ENCODE measurements at regions of chr4 and their contacts with region 1.

Region 1: GRCh38 chr4:164716901-164717300 is 37.0 kb upstream of the SMIM31 start:
- DNase-seq: no peak
- ATAC-seq: peak in 1 of 8 donors; percentile 83
- H3K4me3 ChIP-seq: no peak overlapping the region
- H3K27ac ChIP-seq: no peak overlapping the region
- H3K4me1 ChIP-seq: no peaks in the 10 kb centered on the region
- H3K27me3 ChIP-seq: no peaks in the 10 kb centered on the region
- CTCF ChIP-seq: peak in 1 of 9 donors; percentile 9

Region 2: GRCh38 chr4:165404696-165405095 is 687.8 kb after region 1 on chr4:
- intact Hi-C with region 1: loop called in 1 of 10 experiments (anchors 5 kb)
- DNase-seq: no peak
- ATAC-seq: no peak
- H3K4me3 ChIP-seq: no peak overlapping the region
- H3K27ac ChIP-seq: no peak overlapping the region
- H3K4me1 ChIP-seq: no peaks in the 10 kb centered on the region
- H3K27me3 ChIP-seq: no peaks in the 10 kb centered on the region
- CTCF ChIP-seq: no peak

Region 3: DNA sequence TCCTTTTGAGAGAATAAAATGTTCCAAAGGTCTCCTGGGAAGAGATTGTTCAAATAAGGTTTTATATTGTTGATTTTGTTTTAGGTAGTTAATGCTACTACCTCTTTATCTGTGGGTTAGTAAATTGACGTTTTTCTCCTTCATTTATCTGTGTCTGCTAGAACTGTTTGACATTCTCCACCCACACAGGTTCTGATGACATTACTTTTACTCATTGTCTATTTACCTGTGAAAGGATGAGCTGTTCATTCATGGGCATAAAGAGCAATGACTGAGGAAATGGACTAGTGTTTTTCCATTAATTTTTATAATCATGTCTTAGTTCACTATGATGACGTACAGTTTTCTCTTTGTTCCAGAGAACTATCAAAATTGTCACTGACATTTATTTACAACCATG is 737.5 kb after region 1 on chr4:
- intact Hi-C with region 1: no loop called
- DNase-seq: no peak
- ATAC-seq: no peak
- H3K4me3 ChIP-seq: no peak overlapping the region
- H3K27ac ChIP-seq: no peak overlapping the region
- H3K4me1 ChIP-seq: peaks cover 0 to 12% (median 0%) of the 10 kb centered on the region in 9 donors
- H3K27me3 ChIP-seq: no peaks in the 10 kb centered on the region
- CTCF ChIP-seq: no peak